WTC11 (cell line): ENCODE measurements at regions of chr1 and their contacts with region 1.

Region 1: DNA sequence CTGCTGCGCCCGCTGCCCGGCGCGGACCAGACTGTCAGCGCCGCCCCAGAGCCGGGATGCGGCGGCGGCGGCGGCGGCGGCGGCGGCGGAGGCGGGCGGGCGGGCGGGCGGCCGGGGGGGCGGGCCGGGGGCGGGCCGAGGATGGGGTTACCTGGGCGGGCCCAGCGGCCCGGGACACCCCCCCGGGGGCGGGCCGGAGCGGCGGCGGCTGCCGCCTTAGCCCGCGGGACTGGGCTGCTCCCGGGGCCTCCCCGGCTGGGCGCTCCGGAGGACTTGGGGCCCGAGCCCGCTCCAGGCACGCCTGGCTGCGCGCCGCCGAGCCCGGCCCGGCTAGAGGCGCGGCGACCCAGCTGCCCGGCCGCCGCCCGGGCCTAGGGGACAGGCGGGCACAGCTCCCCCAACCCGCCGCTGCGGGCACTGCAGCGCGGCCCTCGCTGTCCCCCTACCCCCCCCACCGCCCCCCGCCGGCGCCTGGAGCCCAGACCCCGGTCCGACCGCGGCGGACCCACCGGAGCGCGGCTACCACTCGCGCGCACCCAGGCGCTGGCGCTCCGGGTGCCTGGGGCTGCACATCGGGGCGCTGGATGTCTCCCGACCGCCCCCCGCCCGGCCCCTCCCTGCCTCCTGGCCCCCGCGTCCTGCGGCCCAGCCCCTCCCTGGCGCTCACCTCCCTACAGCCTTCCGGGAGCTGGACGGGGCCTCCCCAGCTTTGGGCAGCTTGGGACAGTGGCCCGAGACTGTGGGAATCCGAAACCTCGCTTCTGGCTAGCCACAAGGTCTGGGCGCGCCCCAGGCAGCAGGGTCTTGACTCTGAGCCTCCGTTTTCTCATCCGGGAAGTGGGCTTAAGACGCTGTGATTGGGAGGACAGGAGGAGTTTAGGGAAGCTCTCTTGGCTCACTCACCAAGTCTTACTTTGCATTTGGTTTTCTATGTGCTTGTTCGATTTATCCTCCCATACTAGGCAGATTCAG is at the start of gene WNT4:
- DNase-seq: peak; percentile 57
- ATAC-seq: peak; percentile 80
- H3K4me3 Mint-ChIP-seq: peak within 1 kb of the TSS; percentile 79
- H3K27ac Mint-ChIP-seq: no peak within 1 kb of the TSS
- H3K4me1 Mint-ChIP-seq: peaks cover 24% of the 10 kb centered on the region
- H3K27me3 Mint-ChIP-seq: peaks cover 40% of the 10 kb centered on the region
- CTCF ChIP-seq: peak; percentile 39; the same call in 1 of the 2 replicates
- total RNA-seq, gene WNT4: 0.69 to 0.85 TPM (median 0.70 TPM) in 3 replicates

Region 2: GRCh38 chr1:21869620-21870121 is 273.7 kb before region 1 on chr1:
- CTCF ChIA-PET with region 1: no interaction called
- POLR2A ChIA-PET with region 1: no interaction called
- DNase-seq: no peak
- ATAC-seq: no peak
- H3K4me3 Mint-ChIP-seq: no peak overlapping the region
- H3K27ac Mint-ChIP-seq: no peak overlapping the region
- H3K4me1 Mint-ChIP-seq: peaks cover 26% of the 10 kb centered on the region
- H3K27me3 Mint-ChIP-seq: no peaks in the 10 kb centered on the region
- CTCF ChIP-seq: no peak

Region 3: DNA sequence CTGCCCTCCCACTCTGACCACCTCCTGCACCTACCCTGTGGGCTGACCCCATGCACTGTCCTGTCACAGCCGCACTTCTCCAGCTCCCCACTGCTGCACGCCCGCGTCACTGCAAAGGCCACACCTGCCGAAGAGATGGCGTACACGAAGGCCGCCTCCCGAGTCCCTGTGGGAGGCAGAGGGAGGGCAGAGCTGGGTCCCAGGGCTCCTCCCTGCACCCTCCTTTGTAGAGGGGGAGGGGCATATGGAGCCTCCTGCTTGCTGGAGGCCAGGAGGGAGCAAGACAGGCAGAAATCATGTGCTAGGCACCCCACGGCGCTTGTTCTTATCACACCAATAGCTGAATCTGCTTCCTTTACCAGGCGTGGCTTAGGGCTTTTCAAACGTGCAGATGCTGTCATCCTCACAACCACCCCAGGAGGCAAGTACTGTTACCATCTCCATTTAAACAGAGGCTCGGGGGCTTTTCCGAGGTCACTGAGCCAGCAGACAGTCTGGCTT is 21.9 kb before region 1 on chr1:
- CTCF ChIA-PET with region 1: interaction called, 10 read pairs
- POLR2A ChIA-PET with region 1: no interaction called
- DNase-seq: no peak
- ATAC-seq: peak; percentile 58
- H3K4me3 Mint-ChIP-seq: no peak overlapping the region
- H3K27ac Mint-ChIP-seq: 0 out of 2 replicates have a peak overlapping the region, but pooled peaks have one; percentile 48
- H3K4me1 Mint-ChIP-seq: peaks cover 22% of the 10 kb centered on the region
- H3K27me3 Mint-ChIP-seq: no peaks in the 10 kb centered on the region
- CTCF ChIP-seq: no peak

Region 4: DNA sequence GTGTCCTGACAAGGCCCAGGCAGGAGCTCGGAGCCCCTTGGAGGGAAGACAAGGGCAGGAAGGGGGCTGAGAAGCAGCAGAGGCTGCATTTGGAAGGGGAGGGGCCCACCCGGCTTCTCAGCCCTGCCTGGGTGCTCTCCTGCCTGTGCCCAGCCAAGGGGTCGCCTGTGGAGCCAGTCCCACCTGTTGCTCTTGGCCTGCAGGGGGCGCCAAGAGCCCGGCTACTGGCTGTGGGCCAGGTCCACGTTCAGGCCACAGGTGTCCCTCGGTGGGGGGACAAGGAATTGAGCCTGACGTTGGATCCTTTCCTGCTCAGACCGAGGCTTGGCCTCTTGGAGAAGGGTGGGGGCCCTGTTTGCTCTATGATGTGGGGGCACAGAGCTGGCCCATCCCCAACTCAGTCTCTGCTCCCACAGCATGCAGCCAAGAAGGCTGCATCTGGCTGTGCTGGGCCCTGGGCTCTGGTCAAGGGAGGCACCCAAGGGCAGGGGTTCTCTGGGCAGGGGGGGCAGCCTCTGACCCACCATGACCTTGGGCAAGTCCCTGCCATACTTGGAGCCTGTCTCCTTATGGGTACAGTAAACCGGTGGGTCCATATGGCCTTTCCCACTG is 11.4 kb before region 1 on chr1:
- CTCF ChIA-PET with region 1: interaction called, 36 read pairs
- POLR2A ChIA-PET with region 1: interaction called, 3 read pairs
- DNase-seq: peak; percentile 85
- ATAC-seq: peak; percentile 83
- H3K4me3 Mint-ChIP-seq: no peak overlapping the region
- H3K27ac Mint-ChIP-seq: no peak overlapping the region
- H3K4me1 Mint-ChIP-seq: peaks cover 14% of the 10 kb centered on the region
- H3K27me3 Mint-ChIP-seq: no peaks in the 10 kb centered on the region
- CTCF ChIP-seq: peak; percentile 94

Region 5: GRCh38 chr1:22153660-22154437 is 10.5 kb after region 1 on chr1:
- CTCF ChIA-PET with region 1: interaction called, 12 read pairs
- POLR2A ChIA-PET with region 1: no interaction called
- DNase-seq: no peak
- ATAC-seq: no peak
- H3K4me3 Mint-ChIP-seq: no peak overlapping the region
- H3K27ac Mint-ChIP-seq: peak overlapping the region; percentile 22; the same call in 1 of the 2 replicates
- H3K4me1 Mint-ChIP-seq: no peaks in the 10 kb centered on the region
- H3K27me3 Mint-ChIP-seq: no peaks in the 10 kb centered on the region
- CTCF ChIP-seq: no peak

Region 6: GRCh38 chr1:22190251-22190650 is 46.9 kb after region 1 on chr1:
- CTCF ChIA-PET with region 1: no interaction called
- POLR2A ChIA-PET with region 1: no interaction called
- DNase-seq: no peak
- ATAC-seq: no peak
- H3K4me3 Mint-ChIP-seq: no peak overlapping the region
- H3K27ac Mint-ChIP-seq: no peak overlapping the region
- H3K4me1 Mint-ChIP-seq: 0 out of 2 replicates have a peak, but pooled peaks cover 3% of the 10 kb centered on the region
- H3K27me3 Mint-ChIP-seq: peaks cover 3% of the 10 kb centered on the region; the same call in 1 of the 2 replicates
- CTCF ChIP-seq: no peak